ENCODE measurements at regions of chr4 and their contacts with region 1.

Region 1: DNA sequence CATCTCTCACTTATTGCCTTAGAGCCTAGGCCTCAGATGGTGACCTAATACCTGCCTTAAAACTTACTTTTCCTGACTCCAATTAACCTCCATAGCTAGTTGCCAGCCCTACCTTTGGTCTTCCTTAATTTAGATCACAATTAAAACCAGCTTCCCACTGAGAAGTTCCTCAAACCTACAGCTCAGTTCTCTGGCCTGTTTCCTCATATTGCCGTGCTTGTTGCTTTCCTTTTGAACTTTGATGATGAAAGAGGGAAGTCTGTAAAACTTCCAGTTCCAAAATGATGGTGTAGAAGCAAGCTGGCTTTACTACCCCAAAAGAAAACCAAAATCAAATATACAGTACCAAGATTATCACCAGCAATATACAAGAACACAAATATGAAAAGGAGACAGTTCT is 28.9 kb upstream of the CAMK2D start:
- DNase-seq: no peak
- ATAC-seq: no peak
- H3K4me3 ChIP-seq: no peak overlapping the region
- H3K27ac ChIP-seq: peak overlapping the region in 1 of 10 donors; percentile 73
- H3K4me1 ChIP-seq: peaks cover 0 to 38% (median 0%) of the 10 kb centered on the region in 9 donors
- H3K27me3 ChIP-seq: no peaks in the 10 kb centered on the region
- CTCF ChIP-seq: no peak

Region 2: DNA sequence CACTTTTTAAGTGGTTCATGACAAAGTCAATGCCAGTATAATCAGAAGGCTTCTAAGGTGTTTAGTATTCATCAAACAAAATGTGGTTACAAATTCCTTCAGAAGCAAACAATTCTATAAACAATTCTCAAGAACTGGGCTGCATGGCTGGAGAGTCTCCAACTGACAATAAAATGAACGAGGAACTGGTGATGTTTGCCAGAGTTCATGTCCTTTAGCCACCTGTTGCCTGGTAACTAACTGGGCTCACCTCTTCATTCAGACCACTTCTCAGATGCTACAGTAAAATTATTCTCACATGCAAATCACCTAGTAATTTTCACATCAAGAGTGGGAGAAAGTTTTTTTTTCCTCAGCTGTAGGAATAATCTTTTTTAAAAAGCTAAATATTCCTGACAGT is 82.2 kb before region 1 on chr4:
- intact Hi-C with region 1: no loop called
- DNase-seq: no peak
- ATAC-seq: peak in 4 of 8 donors; percentile 44 to 75 (median 58)
- H3K4me3 ChIP-seq: no peak overlapping the region
- H3K27ac ChIP-seq: peak overlapping the region in 1 of 10 donors; percentile 46
- H3K4me1 ChIP-seq: peaks cover 0 to 66% (median 41%) of the 10 kb centered on the region in 9 donors
- H3K27me3 ChIP-seq: no peaks in the 10 kb centered on the region
- CTCF ChIP-seq: no peak

Region 3: GRCh38 chr4:113901994-113902787 is 111.7 kb after region 1 on chr4:
- intact Hi-C with region 1: loop called in 2 of 10 experiments (anchors 10 kb)
- DNase-seq: no peak
- ATAC-seq: no peak
- H3K4me3 ChIP-seq: no peak overlapping the region
- H3K27ac ChIP-seq: peak overlapping the region in 1 of 10 donors; percentile 24
- H3K4me1 ChIP-seq: peaks cover 0 to 8% (median 0%) of the 10 kb centered on the region in 9 donors
- H3K27me3 ChIP-seq: no peaks in the 10 kb centered on the region
- CTCF ChIP-seq: peak in 1 of 9 donors; percentile 15

Region 4: GRCh38 chr4:114077610-114078009 is 287.1 kb after region 1 on chr4:
- intact Hi-C with region 1: loop called in 4 of 10 experiments (anchors 5 to 10 kb)
- DNase-seq: no peak
- ATAC-seq: no peak
- H3K4me3 ChIP-seq: no peak overlapping the region
- H3K27ac ChIP-seq: no peak overlapping the region
- H3K4me1 ChIP-seq: peaks cover 0 to 4% (median 0%) of the 10 kb centered on the region in 9 donors
- H3K27me3 ChIP-seq: no peaks in the 10 kb centered on the region
- CTCF ChIP-seq: no peak

Measured in heart right ventricle (tissue), 16 donors.